ENCODE measurements at regions of chr17 and their contacts with region 1.

Region 1: GRCh38 chr17:4908301-4908700 is 5.4 kb upstream of the CHRNE start:
- DNase-seq: no peak
- H3K4me3 ChIP-seq: no peak overlapping the region
- H3K27ac ChIP-seq: no peak overlapping the region
- H3K4me1 ChIP-seq: peaks cover 20% of the 10 kb centered on the region
- H3K27me3 ChIP-seq: no peaks in the 10 kb centered on the region
- CTCF ChIP-seq: no peak

Region 2: DNA sequence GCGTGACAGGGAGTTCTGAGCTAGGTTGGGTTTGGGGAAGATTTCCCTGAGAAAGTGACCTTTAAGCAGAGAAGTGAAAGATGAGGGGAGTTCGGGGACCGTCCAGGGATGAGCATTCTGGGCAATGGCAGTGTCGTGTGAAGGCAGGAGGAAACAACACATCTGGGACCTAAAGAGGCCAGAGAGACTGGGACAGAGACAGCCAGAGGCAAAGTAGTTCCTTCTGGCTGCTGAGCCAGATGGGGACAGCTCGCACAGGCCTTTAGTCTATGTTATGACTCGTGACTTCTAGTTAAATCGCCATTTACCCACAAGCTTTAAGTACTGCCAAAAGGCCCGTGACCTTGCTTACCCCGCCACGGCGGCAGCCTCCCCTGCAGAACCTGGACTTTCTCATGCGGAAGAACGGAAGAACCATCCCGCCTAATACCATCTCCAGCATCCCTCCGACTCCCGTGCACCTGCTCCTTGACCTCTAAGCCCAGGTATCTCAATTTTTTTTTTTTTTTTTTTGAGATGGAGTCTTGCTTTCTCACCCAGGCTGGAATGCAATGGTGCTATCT is 185.5 kb before region 1 on chr17:
- CTCF ChIA-PET with region 1: no interaction called
- POLR2A ChIA-PET with region 1: interaction called, 13 read pairs
- intact Hi-C with region 1: no loop called
- DNase-seq: no peak
- H3K4me3 ChIP-seq: no peak overlapping the region
- H3K27ac ChIP-seq: no peak overlapping the region
- H3K4me1 ChIP-seq: peaks cover 26% of the 10 kb centered on the region
- H3K27me3 ChIP-seq: no peaks in the 10 kb centered on the region
- CTCF ChIP-seq: no peak

Region 3: DNA sequence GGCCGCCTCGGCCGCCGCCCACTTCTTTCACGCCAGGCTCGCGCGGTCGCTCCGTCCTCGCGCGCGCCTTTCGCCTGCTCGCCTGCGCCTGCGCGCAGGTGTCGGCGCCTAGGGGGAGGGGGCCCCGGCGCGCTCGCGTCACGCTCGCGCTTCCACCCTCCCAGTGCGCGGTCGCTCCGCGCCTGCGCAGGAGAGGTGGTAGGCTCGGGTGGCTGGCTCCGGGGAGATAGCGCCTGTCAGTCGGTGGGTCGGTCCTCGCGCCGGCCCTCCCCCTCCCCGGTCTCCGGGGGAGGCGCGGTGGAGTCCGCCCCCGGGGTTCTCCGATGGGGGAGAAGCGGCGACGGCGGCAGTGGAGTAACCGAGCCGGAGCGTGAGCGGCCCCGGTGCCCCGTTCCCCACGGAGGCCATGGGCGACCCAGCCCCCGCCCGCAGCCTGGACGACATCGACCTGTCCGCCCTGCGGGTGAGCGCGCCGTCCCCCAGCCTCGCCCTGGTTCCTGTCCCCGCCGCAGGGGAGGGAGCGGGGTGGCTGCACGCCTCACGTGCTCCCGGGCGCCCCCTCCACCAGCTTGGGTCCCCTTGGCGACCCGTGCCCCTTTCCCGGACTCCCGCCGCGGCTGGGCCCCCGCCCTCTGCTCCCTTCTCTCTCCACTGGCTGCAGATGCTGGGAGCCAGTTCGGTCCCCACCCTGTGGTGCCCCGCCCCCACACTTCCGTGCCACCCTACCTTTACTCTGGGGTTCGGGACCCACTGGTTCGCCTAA is 74.9 kb before region 1 on chr17 and contains the start of gene MINK1:
- CTCF ChIA-PET with region 1: no interaction called
- POLR2A ChIA-PET with region 1: no interaction called
- intact Hi-C with region 1: no loop called
- DNase-seq: peak; percentile 77 to 95
- H3K4me3 ChIP-seq: peak within 1 kb of the TSS; percentile 66
- H3K27ac ChIP-seq: peak within 1 kb of the TSS; percentile 91
- H3K4me1 ChIP-seq: peaks cover 18% of the 10 kb centered on the region
- H3K27me3 ChIP-seq: no peaks in the 10 kb centered on the region
- CTCF ChIP-seq: no peak
- total RNA-seq, gene MINK1: 160 and 190 TPM in 2 replicates

Region 4: GRCh38 chr17:4939796-4940624 is 31.7 kb after region 1 on chr17 and contains the starts of genes RNF167 and SLC25A11:
- CTCF ChIA-PET with region 1: interaction called, 16 read pairs
- POLR2A ChIA-PET with region 1: interaction called, 20 read pairs
- intact Hi-C with region 1: loop called (anchors 1 kb)
- DNase-seq: peak; percentile 98
- H3K4me3 ChIP-seq: peak within 1 kb of the TSS; percentile 93
- H3K27ac ChIP-seq: peak within 1 kb of the TSS; percentile 87
- H3K4me1 ChIP-seq: peaks cover 25% of the 10 kb centered on the region
- H3K27me3 ChIP-seq: no peaks in the 10 kb centered on the region
- CTCF ChIP-seq: no peak
- total RNA-seq, gene RNF167: 122 and 135 TPM in 2 replicates
- total RNA-seq, gene SLC25A11: 50.7 and 56.2 TPM in 2 replicates

Region 5: DNA sequence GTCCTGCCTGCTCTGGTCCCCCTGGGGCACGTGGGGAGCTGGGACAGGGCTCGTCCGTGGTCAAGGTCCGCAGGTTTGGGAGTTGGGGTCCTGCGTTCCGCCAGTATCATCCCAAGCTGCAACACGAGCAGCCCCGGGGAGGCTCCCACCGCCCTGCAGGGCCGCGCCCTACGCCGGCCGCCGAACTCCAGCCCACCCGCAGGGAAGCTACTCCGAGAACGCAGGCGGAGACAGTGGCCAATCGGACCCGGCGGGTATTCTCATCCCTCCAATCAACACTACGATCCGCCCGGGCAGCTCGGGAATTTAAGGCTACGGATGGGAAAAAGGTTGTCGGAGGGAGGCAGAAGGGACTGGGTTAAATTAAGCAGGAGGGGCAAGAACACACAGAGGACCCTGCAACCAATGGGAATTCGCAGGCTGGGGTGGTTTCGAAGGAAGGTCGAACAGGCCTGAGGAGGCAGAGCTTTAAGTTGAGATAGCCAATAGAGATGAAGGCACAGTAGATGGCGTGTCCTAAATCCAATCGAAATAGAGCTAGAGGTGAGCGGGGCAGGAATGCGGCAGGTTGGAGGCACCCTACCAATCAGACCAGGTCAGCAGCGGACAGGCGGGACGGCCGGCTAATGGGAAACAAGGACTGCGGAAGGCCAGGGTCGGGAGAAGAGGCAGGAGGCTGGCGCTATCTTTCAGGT is 58.7 kb after region 1 on chr17:
- CTCF ChIA-PET with region 1: interaction called, 16 read pairs
- POLR2A ChIA-PET with region 1: interaction called, 19 read pairs
- intact Hi-C with region 1: loop called (anchors 1 kb)
- DNase-seq: peak; percentile 99
- H3K4me3 ChIP-seq: peak overlapping the region; percentile 72
- H3K27ac ChIP-seq: peak overlapping the region; percentile 95
- H3K4me1 ChIP-seq: peaks cover 25% of the 10 kb centered on the region
- H3K27me3 ChIP-seq: no peaks in the 10 kb centered on the region
- CTCF ChIP-seq: no peak

Region 6: GRCh38 chr17:5031365-5032082 is 123.2 kb after region 1 on chr17:
- CTCF ChIA-PET with region 1: interaction called, 13 read pairs
- POLR2A ChIA-PET with region 1: interaction called, 4 read pairs
- intact Hi-C with region 1: no loop called
- DNase-seq: peak; percentile 71 to 81
- H3K4me3 ChIP-seq: peak overlapping the region; percentile 56; the same call in 1 of the 2 replicates
- H3K27ac ChIP-seq: no peak overlapping the region
- H3K4me1 ChIP-seq: 0 out of 2 replicates have a peak, but pooled peaks cover 3% of the 10 kb centered on the region
- H3K27me3 ChIP-seq: peaks cover 3% of the 10 kb centered on the region; the same call in 1 of the 2 replicates
- CTCF ChIP-seq: peak; percentile 86

Region 7: GRCh38 chr17:5237541-5238016 is 329.3 kb after region 1 on chr17:
- CTCF ChIA-PET with region 1: no interaction called
- POLR2A ChIA-PET with region 1: no interaction called
- intact Hi-C with region 1: loop called (anchors 1 kb)
- DNase-seq: peak; percentile 64 to 68
- H3K4me3 ChIP-seq: no peak overlapping the region
- H3K27ac ChIP-seq: no peak overlapping the region
- H3K4me1 ChIP-seq: no peaks in the 10 kb centered on the region
- H3K27me3 ChIP-seq: no peaks in the 10 kb centered on the region
- CTCF ChIP-seq: peak; percentile 79